Activated CD8-positive, alpha-beta T cell treated with anti-CD3 and anti-CD28 coated beads for 36 hours (primary cell): ENCODE measurements at regions of chr7 and their contacts with region 1.

Region 1: GRCh38 chr7:116236020-116236630 is 25.8 kb downstream of the TES start:
- DNase-seq: peak; percentile 77
- ATAC-seq: peak; percentile 65
- H3K4me3 Mint-ChIP-seq: no peak overlapping the region
- H3K27ac Mint-ChIP-seq: no peak overlapping the region
- H3K4me1 Mint-ChIP-seq: peaks cover 62% of the 10 kb centered on the region
- H3K27me3 Mint-ChIP-seq: no peaks in the 10 kb centered on the region
- CTCF ChIP-seq: peak; percentile 64

Region 2: GRCh38 chr7:115952832-115953231 is 283.3 kb before region 1 on chr7:
- CTCF ChIA-PET with region 1: no interaction called
- POLR2A ChIA-PET with region 1: no interaction called
- intact Hi-C with region 1: no loop called
- DNase-seq: no peak
- ATAC-seq: no peak
- H3K4me3 Mint-ChIP-seq: no peak overlapping the region
- H3K27ac Mint-ChIP-seq: no peak overlapping the region
- H3K4me1 Mint-ChIP-seq: no peaks in the 10 kb centered on the region
- H3K27me3 Mint-ChIP-seq: no peaks in the 10 kb centered on the region
- CTCF ChIP-seq: no peak

Region 3: DNA sequence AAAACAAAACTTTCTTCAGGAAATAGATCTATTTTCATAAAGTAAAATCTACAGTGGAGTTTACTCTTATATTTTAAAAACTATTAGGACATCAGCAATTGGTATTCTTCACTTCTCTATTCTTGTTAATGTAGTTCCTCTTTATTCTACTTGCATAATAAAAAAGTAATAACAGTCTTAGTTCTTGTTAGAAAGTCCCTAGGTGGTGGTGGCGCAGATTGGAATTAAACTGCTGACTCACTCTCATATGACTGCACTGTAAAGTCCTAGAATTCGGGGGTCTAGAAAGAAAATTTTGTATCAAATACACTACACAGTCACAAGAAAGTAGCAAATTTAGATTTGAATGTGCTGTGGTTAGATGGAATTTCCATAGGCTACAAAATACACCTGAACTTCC is 70.4 kb before region 1 on chr7:
- CTCF ChIA-PET with region 1: interaction called, 56 read pairs
- POLR2A ChIA-PET with region 1: no interaction called
- intact Hi-C with region 1: no loop called
- DNase-seq: no peak
- ATAC-seq: no peak
- H3K4me3 Mint-ChIP-seq: no peak overlapping the region
- H3K27ac Mint-ChIP-seq: no peak overlapping the region
- H3K4me1 Mint-ChIP-seq: peaks cover 8% of the 10 kb centered on the region
- H3K27me3 Mint-ChIP-seq: peaks cover 3% of the 10 kb centered on the region
- CTCF ChIP-seq: no peak

Region 4: GRCh38 chr7:116180302-116180701 is 55.8 kb before region 1 on chr7:
- CTCF ChIA-PET with region 1: interaction called, 294 read pairs
- POLR2A ChIA-PET with region 1: no interaction called
- intact Hi-C with region 1: loop called (anchors 1 kb)
- DNase-seq: peak; percentile 18
- ATAC-seq: peak; percentile 74
- H3K4me3 Mint-ChIP-seq: no peak overlapping the region
- H3K27ac Mint-ChIP-seq: no peak overlapping the region
- H3K4me1 Mint-ChIP-seq: no peaks in the 10 kb centered on the region
- H3K27me3 Mint-ChIP-seq: no peaks in the 10 kb centered on the region
- CTCF ChIP-seq: peak; percentile 82

Region 5: GRCh38 chr7:116211006-116211912 is 24.9 kb before region 1 on chr7:
- CTCF ChIA-PET with region 1: interaction called, 35 read pairs
- POLR2A ChIA-PET with region 1: interaction called, 6 read pairs
- intact Hi-C with region 1: no loop called
- DNase-seq: peak; percentile 81
- ATAC-seq: peak; percentile 75
- H3K4me3 Mint-ChIP-seq: peak overlapping the region; percentile 97
- H3K27ac Mint-ChIP-seq: peak overlapping the region; percentile 97
- H3K4me1 Mint-ChIP-seq: peaks cover 50% of the 10 kb centered on the region
- H3K27me3 Mint-ChIP-seq: no peaks in the 10 kb centered on the region
- CTCF ChIP-seq: no peak

Region 6: GRCh38 chr7:116224492-116225098 is 11.5 kb before region 1 on chr7:
- CTCF ChIA-PET with region 1: interaction called, 31 read pairs
- POLR2A ChIA-PET with region 1: no interaction called
- intact Hi-C with region 1: no loop called
- DNase-seq: no peak
- ATAC-seq: peak; percentile 82
- H3K4me3 Mint-ChIP-seq: peak overlapping the region; percentile 60
- H3K27ac Mint-ChIP-seq: peak overlapping the region; percentile 44
- H3K4me1 Mint-ChIP-seq: peaks cover 78% of the 10 kb centered on the region
- H3K27me3 Mint-ChIP-seq: no peaks in the 10 kb centered on the region
- CTCF ChIP-seq: no peak

Region 7: DNA sequence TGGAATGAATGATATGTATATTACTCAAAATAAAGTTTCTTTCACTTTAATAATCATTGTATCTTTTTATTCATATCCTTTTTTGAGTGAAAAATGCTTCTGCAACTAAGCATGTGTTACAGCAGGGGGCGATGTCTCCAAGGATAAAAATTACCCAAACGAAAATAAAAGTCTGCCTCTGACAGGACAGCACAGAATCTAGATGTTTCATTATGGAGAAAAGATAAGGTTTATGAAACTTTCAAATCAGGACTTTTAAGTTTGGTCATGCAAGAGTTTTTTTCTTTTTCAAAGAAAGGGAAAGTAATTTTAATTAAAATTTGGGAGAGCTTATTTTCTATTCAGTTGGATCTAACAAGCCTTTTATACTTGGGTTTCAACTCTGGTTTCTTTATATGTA is 22.6 kb after region 1 on chr7:
- CTCF ChIA-PET with region 1: interaction called, 46 read pairs
- POLR2A ChIA-PET with region 1: interaction called, 3 read pairs
- intact Hi-C with region 1: no loop called
- DNase-seq: peak; percentile 44
- ATAC-seq: peak; percentile 42
- H3K4me3 Mint-ChIP-seq: no peak overlapping the region
- H3K27ac Mint-ChIP-seq: no peak overlapping the region
- H3K4me1 Mint-ChIP-seq: peaks cover 6% of the 10 kb centered on the region
- H3K27me3 Mint-ChIP-seq: no peaks in the 10 kb centered on the region
- CTCF ChIP-seq: peak; percentile 81